ENCODE measurements at regions of chr1 and their contacts with region 1.

Region 1: GRCh38 chr1:55164906-55165305 is 50.3 kb downstream of the USP24 start:
- DNase-seq: no peak
- ATAC-seq: no peak
- H3K4me3 ChIP-seq: no peak overlapping the region
- H3K27ac ChIP-seq: no peak overlapping the region
- H3K4me1 ChIP-seq: peaks cover 2% of the 10 kb centered on the region
- H3K27me3 ChIP-seq: no peaks in the 10 kb centered on the region

Region 2: GRCh38 chr1:55277377-55278130 is 112.6 kb after region 1 on chr1:
- intact Hi-C with region 1: loop called in 1 of 4 experiments (anchors 10 kb)
- DNase-seq: peak; percentile 89 to 93 (median 91)
- ATAC-seq: peak; percentile 87 to 90
- H3K4me3 ChIP-seq: no peak overlapping the region
- H3K27ac ChIP-seq: no peak overlapping the region
- H3K4me1 ChIP-seq: no peaks in the 10 kb centered on the region
- H3K27me3 ChIP-seq: no peaks in the 10 kb centered on the region

Measured in right cardiac atrium (tissue), 5 donors.